ENCODE measurements at regions of chr9 and their contacts with region 1.

Region 1: GRCh38 chr9:71285191-71285656 is 163.8 kb upstream of the TRPM3 start:
- DNase-seq: peak in 1 of 3 donors; percentile 18
- ATAC-seq: peak; percentile 81 to 84
- H3K4me3 ChIP-seq: no peak overlapping the region
- H3K27ac ChIP-seq: no peak overlapping the region
- H3K4me1 ChIP-seq: no peaks in the 10 kb centered on the region
- H3K27me3 ChIP-seq: no peaks in the 10 kb centered on the region

Region 2: DNA sequence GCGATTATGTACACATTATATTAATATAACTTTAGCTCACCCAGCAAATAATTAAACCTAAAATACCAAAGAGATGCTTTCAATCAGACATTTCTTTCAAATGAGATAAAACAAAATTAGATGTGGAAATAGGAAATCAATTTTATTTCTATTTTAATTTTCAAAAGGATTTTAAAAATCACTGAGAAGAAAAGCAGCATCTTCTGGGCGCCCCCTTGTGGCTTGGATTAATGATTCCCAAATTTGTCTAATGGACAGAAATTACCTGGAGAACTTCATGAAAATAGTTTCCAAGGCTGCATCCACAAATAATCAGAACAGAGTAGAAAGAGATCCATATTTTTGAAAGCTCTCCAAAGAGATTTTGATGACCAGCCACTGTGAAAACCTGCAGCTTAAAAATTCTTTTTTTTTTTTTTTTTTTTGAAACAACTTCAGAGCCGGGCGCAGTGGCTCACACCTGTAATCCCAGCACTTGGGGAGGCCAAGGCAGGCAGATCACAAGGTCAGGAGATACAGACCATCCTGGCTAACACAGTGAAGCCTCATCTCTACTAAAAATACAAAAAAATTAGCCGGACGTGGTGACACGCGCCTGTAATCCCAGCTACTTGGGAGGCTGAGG is 534.0 kb after region 1 on chr9:
- intact Hi-C with region 1: loop called in 3 of 4 experiments (anchors 5 to 10 kb)
- DNase-seq: peak in 2 of 3 donors; percentile 28 to 56
- ATAC-seq: no peak
- H3K4me3 ChIP-seq: no peak overlapping the region
- H3K27ac ChIP-seq: no peak overlapping the region
- H3K4me1 ChIP-seq: peaks cover 2% of the 10 kb centered on the region
- H3K27me3 ChIP-seq: no peaks in the 10 kb centered on the region